HCT116 (cell line): ENCODE measurements at regions of chr1 and their contacts with region 1.

Region 1: DNA sequence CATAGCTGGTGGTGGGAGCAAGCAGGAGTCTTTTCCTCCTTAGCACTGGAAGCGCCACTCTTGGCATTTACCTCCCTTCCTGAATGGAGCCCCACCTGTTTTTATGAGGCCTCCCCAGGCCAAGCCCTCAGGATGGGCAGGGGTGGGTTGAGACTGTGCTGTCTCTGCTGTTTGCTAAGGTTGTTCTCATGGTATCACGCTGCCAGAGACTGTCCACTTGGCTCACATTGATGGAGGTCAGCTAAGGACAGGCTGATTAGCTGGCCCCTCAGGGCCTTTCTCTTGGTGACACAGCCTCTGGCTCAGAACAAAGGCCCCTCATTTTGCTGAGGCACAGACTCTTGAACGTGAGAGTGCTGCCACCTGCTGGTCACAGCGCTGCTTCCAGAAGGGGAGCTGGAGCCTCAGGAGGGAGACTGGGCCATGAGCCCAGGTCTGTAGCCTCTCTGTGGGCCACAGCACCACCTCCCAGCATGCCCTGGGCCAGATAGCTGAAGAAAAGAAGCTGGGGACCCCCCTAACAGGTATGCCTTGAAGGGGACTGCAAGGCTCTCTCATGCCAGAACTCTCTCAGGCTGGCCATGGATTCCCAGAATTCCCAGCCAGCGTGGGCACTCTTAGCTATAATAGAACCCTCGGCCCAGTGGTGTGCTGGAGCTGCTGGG is 85.6 kb downstream of the CD58 start:
- DNase-seq: peak; percentile 73
- ATAC-seq: peak; percentile 88
- H3K4me3 ChIP-seq: no peak overlapping the region
- H3K27ac ChIP-seq: peak overlapping the region; percentile 23; the same call in 1 of the 2 replicates
- H3K4me1 ChIP-seq: peaks cover 34 to 54% of the 10 kb centered on the region in 2 experiments
- H3K27me3 ChIP-seq: no peaks in the 10 kb centered on the region
- CTCF ChIP-seq: peak; percentile 86 to 97 (median 96)
- POLR2A ChIP-seq: no peak
- RAD21 ChIP-seq: peak; percentile 95

Region 2: DNA sequence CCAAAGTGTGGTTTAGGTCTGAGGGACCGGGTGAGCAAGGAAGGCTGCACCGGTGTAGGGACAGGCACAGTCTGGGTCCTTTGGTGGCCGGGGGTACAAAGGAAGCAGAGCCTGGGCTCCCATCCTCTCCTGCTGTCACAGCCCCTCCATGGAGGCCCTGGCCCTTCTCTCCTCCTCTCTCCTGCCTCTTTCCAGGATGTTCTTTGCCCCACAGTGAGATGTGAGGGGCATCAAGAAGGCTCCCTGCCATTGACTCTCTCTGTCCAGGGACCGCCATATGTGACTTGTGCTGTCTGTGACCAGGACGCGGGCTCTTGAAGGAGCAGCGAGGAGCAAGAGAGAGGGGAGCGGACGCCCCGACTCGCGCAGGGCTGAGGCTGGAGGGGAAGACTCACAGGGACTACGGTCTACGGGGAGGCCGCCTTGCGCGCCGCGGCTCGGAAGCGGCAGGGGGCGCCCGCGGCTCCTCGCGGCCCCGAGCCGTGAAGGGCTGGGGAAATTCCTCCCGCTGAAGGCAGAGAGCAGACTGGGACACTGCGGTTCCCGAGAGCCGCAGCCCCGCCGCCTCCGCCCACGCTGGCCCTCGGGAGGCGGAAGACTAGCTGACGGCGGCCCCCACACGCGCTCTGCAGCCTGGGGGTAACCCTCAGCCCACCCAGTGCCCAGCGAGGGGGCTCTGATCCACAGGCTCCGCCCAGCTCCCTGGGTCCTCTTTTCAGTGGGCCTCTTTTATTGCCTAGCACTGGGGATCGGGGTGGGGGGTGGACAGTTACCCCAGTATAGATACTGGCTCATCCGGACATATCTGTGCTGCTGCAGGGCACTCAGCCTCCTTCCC is 333.2 kb before region 1 on chr1:
- CTCF ChIA-PET with region 1: interaction called, 33 read pairs
- POLR2A ChIA-PET with region 1: interaction called, 4 read pairs
- RAD21 ChIA-PET with region 1: interaction called, 3 to 6 read pairs
- intact Hi-C with region 1: loop called (anchors 1 kb)
- DNase-seq: peak; percentile 26
- ATAC-seq: peak; percentile 98
- H3K4me3 ChIP-seq: peak overlapping the region; percentile 45 to 59
- H3K27ac ChIP-seq: peak overlapping the region; percentile 58; the same call in 1 of the 2 replicates
- H3K4me1 ChIP-seq: peaks cover 0 to 13% of the 10 kb centered on the region in 2 experiments; a peak in 2 of 4 replicates
- H3K27me3 ChIP-seq: no peaks in the 10 kb centered on the region
- CTCF ChIP-seq: peak; percentile 73 to 91 (median 89)
- POLR2A ChIP-seq: peak; percentile 25
- RAD21 ChIP-seq: peak; percentile 85

Region 3: DNA sequence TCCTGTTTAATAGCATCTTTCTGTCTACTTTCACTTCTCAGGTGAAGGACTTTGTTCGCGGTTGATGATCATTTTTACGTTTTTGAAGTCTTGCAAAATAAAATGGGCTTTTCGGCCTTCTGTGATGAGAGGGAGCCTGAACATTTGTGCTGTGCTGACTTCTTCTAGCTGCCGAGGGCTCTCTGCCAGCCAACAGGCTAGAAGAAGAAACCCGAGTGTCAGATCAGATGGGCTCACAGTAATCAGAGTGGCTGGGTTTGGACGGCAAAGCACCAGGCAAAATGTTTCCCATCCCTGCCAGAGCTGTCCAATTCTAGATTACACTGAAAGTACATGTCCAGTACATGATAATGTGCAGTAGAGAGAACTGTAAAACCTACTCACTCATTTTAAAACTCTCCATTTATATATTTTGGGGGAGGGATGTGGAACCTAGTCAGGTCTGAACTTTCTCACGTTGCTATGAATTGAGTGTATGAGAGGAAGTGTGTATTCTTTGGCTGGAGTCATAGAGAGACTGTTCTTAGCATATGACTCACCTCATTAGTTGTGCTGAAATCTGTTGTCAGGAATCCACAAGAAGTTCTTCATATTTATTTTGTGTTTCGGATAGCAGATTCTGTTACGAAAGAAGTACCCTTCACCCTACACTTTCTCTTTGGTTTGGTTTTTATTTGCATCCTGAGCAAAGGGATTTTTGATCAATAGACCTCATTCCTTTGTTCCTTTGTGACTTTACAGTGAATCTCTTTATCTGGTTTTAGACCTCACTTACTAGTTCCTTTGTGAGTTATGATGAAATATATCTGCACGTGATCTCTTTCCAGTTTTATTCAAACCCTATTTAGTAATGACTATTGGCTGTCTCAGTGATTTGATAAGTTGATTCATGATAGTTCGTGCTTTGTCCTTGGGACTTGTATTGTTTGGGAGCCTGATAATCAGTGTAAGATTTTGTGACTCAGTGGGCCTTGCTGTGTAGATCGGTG is 107.4 kb before region 1 on chr1:
- CTCF ChIA-PET with region 1: interaction called, 13 read pairs
- POLR2A ChIA-PET with region 1: interaction called, 4 read pairs
- RAD21 ChIA-PET with region 1: interaction called in 1 of 2 experiments, 4 read pairs
- intact Hi-C with region 1: loop called (anchors 5 kb)
- DNase-seq: no peak
- ATAC-seq: no peak
- H3K4me3 ChIP-seq: no peak overlapping the region
- H3K27ac ChIP-seq: peak overlapping the region; percentile 15; the same call in 1 of the 2 replicates
- H3K4me1 ChIP-seq: peaks cover 37 to 67% of the 10 kb centered on the region in 2 experiments
- H3K27me3 ChIP-seq: no peaks in the 10 kb centered on the region
- CTCF ChIP-seq: no peak
- POLR2A ChIP-seq: no peak
- RAD21 ChIP-seq: no peak

Region 4: GRCh38 chr1:116498789-116499628 is 13.8 kb after region 1 on chr1:
- CTCF ChIA-PET with region 1: interaction called, 84 read pairs
- POLR2A ChIA-PET with region 1: interaction called, 3 read pairs
- RAD21 ChIA-PET with region 1: interaction called, 13 to 15 read pairs
- intact Hi-C with region 1: no loop called
- DNase-seq: peak; percentile 55
- ATAC-seq: peak; percentile 95
- H3K4me3 ChIP-seq: no peak overlapping the region
- H3K27ac ChIP-seq: no peak overlapping the region
- H3K4me1 ChIP-seq: peaks cover 6 to 15% of the 10 kb centered on the region in 2 experiments
- H3K27me3 ChIP-seq: no peaks in the 10 kb centered on the region
- CTCF ChIP-seq: peak; percentile 71 to 96 (median 87)
- POLR2A ChIP-seq: no peak
- RAD21 ChIP-seq: peak; percentile 97